CD4-positive, alpha-beta memory T cell (primary cell): ENCODE measurements at regions of chr12 and their contacts with region 1.

Region 1: GRCh38 chr12:68223083-68223747 is 2.4 kb downstream of the IL26 start:
- DNase-seq: peak; percentile 68 to 71 (median 69)
- H3K4me3 ChIP-seq: no peak overlapping the region
- H3K4me3 Mint-ChIP-seq: peak overlapping the region in 7 of 8 donors; percentile 32 to 82 (median 75)
- H3K27ac ChIP-seq: no peak overlapping the region
- H3K27ac Mint-ChIP-seq: peak overlapping the region in 5 of 7 donors; percentile 10 to 93 (median 71)
- H3K4me1 ChIP-seq: peaks cover 7% of the 10 kb centered on the region
- H3K4me1 Mint-ChIP-seq: peaks cover 8 to 14% (median 10%) of the 10 kb centered on the region in 4 donors
- H3K27me3 ChIP-seq: no peaks in the 10 kb centered on the region
- H3K27me3 Mint-ChIP-seq: no peaks in the 10 kb centered on the region

Region 2: DNA sequence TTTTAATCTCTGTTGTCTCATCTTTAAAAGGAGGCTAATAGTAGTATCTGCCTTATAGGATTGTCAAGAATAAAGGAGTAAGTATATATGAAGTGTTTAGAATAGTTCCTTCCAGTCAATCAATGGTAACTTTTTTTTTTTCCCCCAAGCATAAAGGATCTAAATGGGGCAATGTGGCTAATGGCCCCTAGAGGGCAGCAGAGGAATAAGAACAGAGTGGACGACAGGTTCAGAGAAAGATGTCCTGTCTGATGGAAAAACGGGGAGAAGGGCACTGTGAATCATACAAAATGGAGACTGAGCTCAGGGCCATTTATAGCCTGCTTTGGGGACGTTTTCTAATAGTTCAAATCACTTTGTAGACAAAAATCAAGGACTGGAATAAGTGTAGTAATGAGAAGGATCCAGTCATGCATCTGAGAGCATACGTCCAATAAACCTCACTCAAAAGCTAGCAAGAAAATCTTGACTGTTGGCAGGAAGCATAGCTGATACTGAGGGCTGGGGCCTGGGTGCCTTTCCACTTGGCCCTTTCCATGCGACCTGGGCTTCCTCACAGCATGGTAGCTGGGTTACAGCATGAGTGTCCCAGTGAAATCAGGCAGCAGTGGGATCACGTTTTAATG is 182.7 kb before region 1 on chr12:
- CTCF ChIA-PET with region 1: interaction called, 27 read pairs
- POLR2A ChIA-PET with region 1: no interaction called
- intact Hi-C with region 1: loop called (anchors 1 kb)
- DNase-seq: peak; percentile 60 to 69 (median 65)
- H3K4me3 ChIP-seq: no peak overlapping the region
- H3K4me3 Mint-ChIP-seq: peak overlapping the region in 4 of 8 donors; percentile 2 to 29 (median 16)
- H3K27ac ChIP-seq: no peak overlapping the region
- H3K27ac Mint-ChIP-seq: peak overlapping the region in 5 of 7 donors; percentile 2 to 82 (median 34)
- H3K4me1 ChIP-seq: peaks cover 12% of the 10 kb centered on the region
- H3K4me1 Mint-ChIP-seq: peaks cover 12 to 19% (median 16%) of the 10 kb centered on the region in 4 donors
- H3K27me3 ChIP-seq: no peaks in the 10 kb centered on the region
- H3K27me3 Mint-ChIP-seq: no peaks in the 10 kb centered on the region

Region 3: DNA sequence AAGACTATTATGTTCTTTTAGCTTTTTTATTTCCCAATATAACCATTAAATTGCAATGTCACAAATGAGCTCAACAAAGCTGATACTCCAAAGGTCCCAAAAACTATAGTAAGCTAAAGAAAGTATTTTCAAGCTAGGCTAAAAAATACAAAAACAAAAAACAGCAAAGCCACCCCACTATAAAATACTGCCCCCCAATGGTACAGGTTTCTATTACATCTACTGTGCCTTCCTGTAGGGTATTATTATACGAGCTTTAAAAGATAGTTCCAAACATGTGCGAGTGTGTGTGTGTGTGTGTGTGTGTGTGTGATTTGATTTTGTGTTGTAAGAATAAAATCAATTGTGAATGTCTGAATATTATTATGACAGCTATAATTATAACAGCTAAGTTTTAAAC is 64.8 kb before region 1 on chr12:
- CTCF ChIA-PET with region 1: interaction called, 13 read pairs
- POLR2A ChIA-PET with region 1: no interaction called
- intact Hi-C with region 1: no loop called
- DNase-seq: peak; percentile 37 to 63 (median 53)
- H3K4me3 ChIP-seq: no peak overlapping the region
- H3K4me3 Mint-ChIP-seq: peak overlapping the region; percentile 1 to 75 (median 58)
- H3K27ac ChIP-seq: no peak overlapping the region
- H3K27ac Mint-ChIP-seq: peak overlapping the region in 4 of 7 donors; percentile 13 to 66 (median 42)
- H3K4me1 ChIP-seq: peaks cover 42% of the 10 kb centered on the region
- H3K4me1 Mint-ChIP-seq: peaks cover 14 to 47% (median 28%) of the 10 kb centered on the region in 4 donors
- H3K27me3 ChIP-seq: no peaks in the 10 kb centered on the region
- H3K27me3 Mint-ChIP-seq: no peaks in the 10 kb centered on the region

Region 4: DNA sequence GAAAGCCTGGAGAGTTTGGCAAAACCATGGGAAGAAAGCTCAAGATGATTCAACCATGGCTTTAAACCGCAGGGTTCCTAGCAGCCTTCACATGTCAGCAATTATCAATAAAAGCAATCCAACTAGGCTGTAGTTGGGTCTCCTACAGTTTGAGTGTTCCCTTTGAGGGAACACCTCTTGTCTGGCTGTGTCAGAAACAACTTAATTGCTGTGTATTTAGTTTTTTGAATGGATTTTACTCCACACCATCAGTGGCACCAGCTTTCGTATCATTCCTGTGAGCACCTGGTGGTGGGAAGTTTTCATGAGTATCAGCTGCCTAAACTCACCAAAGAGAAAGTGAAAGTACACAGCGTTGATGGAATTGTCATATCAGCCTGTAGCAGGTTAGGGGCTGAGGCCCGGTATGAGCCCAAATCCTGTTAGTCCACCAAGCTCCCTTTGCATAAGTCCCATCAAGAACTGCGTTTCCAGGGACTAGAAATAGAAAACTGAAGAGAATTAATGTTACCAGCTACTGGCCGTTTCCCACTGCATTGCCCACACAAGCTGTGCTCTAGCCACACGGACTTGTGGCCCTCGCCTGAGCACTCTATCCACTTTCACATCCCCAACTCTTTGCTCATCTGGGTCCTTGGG is 13.3 kb after region 1 on chr12:
- CTCF ChIA-PET with region 1: interaction called, 28 read pairs
- POLR2A ChIA-PET with region 1: interaction called, 10 read pairs
- intact Hi-C with region 1: loop called (anchors 2 kb)
- DNase-seq: peak; percentile 50 to 70 (median 61)
- H3K4me3 ChIP-seq: peak overlapping the region; percentile 38 to 45
- H3K4me3 Mint-ChIP-seq: peak overlapping the region; percentile 86 to 95 (median 94)
- H3K27ac ChIP-seq: peak overlapping the region; percentile 57
- H3K27ac Mint-ChIP-seq: peak overlapping the region; percentile 55 to 99 (median 97)
- H3K4me1 ChIP-seq: peaks cover 33% of the 10 kb centered on the region
- H3K4me1 Mint-ChIP-seq: peaks cover 35 to 57% (median 47%) of the 10 kb centered on the region in 4 donors
- H3K27me3 ChIP-seq: no peaks in the 10 kb centered on the region
- H3K27me3 Mint-ChIP-seq: no peaks in the 10 kb centered on the region

Region 5: GRCh38 chr12:68290126-68290525 is 66.9 kb after region 1 on chr12:
- CTCF ChIA-PET with region 1: interaction called, 16 read pairs
- POLR2A ChIA-PET with region 1: interaction called, 5 read pairs
- intact Hi-C with region 1: no loop called
- DNase-seq: peak; percentile 48 to 69 (median 60)
- H3K4me3 ChIP-seq: no peak overlapping the region
- H3K4me3 Mint-ChIP-seq: peak overlapping the region in 6 of 8 donors; percentile 3 to 74 (median 46)
- H3K27ac ChIP-seq: no peak overlapping the region
- H3K27ac Mint-ChIP-seq: peak overlapping the region in 5 of 7 donors; percentile 4 to 67 (median 47)
- H3K4me1 ChIP-seq: peaks cover 26% of the 10 kb centered on the region
- H3K4me1 Mint-ChIP-seq: peaks cover 20 to 41% (median 31%) of the 10 kb centered on the region in 4 donors
- H3K27me3 ChIP-seq: no peaks in the 10 kb centered on the region
- H3K27me3 Mint-ChIP-seq: no peaks in the 10 kb centered on the region

Region 6: DNA sequence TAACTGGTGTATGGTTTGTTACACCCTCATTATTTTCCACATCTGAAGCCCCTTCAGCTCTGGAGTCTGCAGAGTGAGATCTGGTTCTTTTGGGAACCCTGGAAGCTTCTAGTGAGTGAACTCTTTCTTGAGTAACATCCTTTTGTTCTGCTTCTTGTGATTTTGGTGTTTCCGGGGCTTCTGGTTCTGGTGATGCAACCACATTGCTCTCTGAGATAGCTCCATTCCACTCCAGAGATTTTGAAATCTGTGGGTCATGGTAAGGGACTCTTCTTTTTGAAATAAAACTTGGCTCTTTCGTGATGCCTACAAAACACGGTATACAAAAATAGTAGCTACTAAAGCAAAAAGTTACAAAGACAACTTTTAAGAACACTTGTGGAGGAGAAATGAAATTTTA is 103.5 kb after region 1 on chr12:
- CTCF ChIA-PET with region 1: interaction called, 41 read pairs
- POLR2A ChIA-PET with region 1: interaction called, 3 read pairs
- intact Hi-C with region 1: no loop called
- DNase-seq: no peak
- H3K4me3 ChIP-seq: no peak overlapping the region
- H3K4me3 Mint-ChIP-seq: no peak overlapping the region
- H3K27ac ChIP-seq: no peak overlapping the region
- H3K27ac Mint-ChIP-seq: peak overlapping the region in 1 of 7 donors; percentile 0
- H3K4me1 ChIP-seq: peaks cover 10% of the 10 kb centered on the region
- H3K4me1 Mint-ChIP-seq: peaks cover 16 to 24% (median 22%) of the 10 kb centered on the region in 4 donors
- H3K27me3 ChIP-seq: no peaks in the 10 kb centered on the region
- H3K27me3 Mint-ChIP-seq: no peaks in the 10 kb centered on the region

Region 7: GRCh38 chr12:69070319-69071090 is 847.3 kb after region 1 on chr12:
- CTCF ChIA-PET with region 1: no interaction called
- POLR2A ChIA-PET with region 1: no interaction called
- intact Hi-C with region 1: loop called (anchors 2 kb)
- DNase-seq: peak; percentile 39 to 48 (median 42)
- H3K4me3 ChIP-seq: no peak overlapping the region
- H3K4me3 Mint-ChIP-seq: no peak overlapping the region
- H3K27ac ChIP-seq: no peak overlapping the region
- H3K27ac Mint-ChIP-seq: peak overlapping the region in 1 of 7 donors; percentile 3
- H3K4me1 ChIP-seq: no peaks in the 10 kb centered on the region
- H3K4me1 Mint-ChIP-seq: no peaks in the 10 kb centered on the region
- H3K27me3 ChIP-seq: no peaks in the 10 kb centered on the region
- H3K27me3 Mint-ChIP-seq: peaks cover 3 to 7% of the 10 kb centered on the region in 2 donors